Activated B cell treated with CpG ODN at 0.5 μM for 24 hours (primary cell): ENCODE measurements at regions of chr19 and their contacts with region 1.

Region 1: GRCh38 chr19:13212759-13213330 is 62.6 kb downstream of the IER2 start:
- DNase-seq: peak; percentile 60
- ATAC-seq: no peak
- H3K4me3 Mint-ChIP-seq: no peak overlapping the region
- H3K27ac Mint-ChIP-seq: no peak overlapping the region
- H3K4me1 Mint-ChIP-seq: peaks cover 66% of the 10 kb centered on the region
- H3K27me3 Mint-ChIP-seq: no peaks in the 10 kb centered on the region
- CTCF ChIP-seq: no peak

Region 2: GRCh38 chr19:13099073-13099999 is 113.5 kb before region 1 on chr19:
- CTCF ChIA-PET with region 1: no interaction called
- POLR2A ChIA-PET with region 1: interaction called, 10 read pairs
- intact Hi-C with region 1: loop called (anchors 2 kb)
- DNase-seq: peak; percentile 70
- ATAC-seq: peak; percentile 2
- H3K4me3 Mint-ChIP-seq: peak overlapping the region; percentile 88
- H3K27ac Mint-ChIP-seq: peak overlapping the region; percentile 93
- H3K4me1 Mint-ChIP-seq: peaks cover 76% of the 10 kb centered on the region
- H3K27me3 Mint-ChIP-seq: no peaks in the 10 kb centered on the region
- CTCF ChIP-seq: no peak

Region 3: GRCh38 chr19:13117772-13118423 is 94.9 kb before region 1 on chr19 and contains the start of gene NACC1:
- CTCF ChIA-PET with region 1: no interaction called
- POLR2A ChIA-PET with region 1: interaction called, 6 read pairs
- intact Hi-C with region 1: loop called (anchors 1 kb)
- DNase-seq: peak; percentile 94
- ATAC-seq: peak; percentile 81
- H3K4me3 Mint-ChIP-seq: peak within 1 kb of the TSS; percentile 99
- H3K27ac Mint-ChIP-seq: peak within 1 kb of the TSS; percentile 96
- H3K4me1 Mint-ChIP-seq: peaks cover 64% of the 10 kb centered on the region
- H3K27me3 Mint-ChIP-seq: no peaks in the 10 kb centered on the region
- CTCF ChIP-seq: no peak
- total RNA-seq, gene NACC1: 62.1 and 68.8 TPM in 2 replicates